ENCODE measurements at regions of chr7 and their contacts with region 1.

Region 1: DNA sequence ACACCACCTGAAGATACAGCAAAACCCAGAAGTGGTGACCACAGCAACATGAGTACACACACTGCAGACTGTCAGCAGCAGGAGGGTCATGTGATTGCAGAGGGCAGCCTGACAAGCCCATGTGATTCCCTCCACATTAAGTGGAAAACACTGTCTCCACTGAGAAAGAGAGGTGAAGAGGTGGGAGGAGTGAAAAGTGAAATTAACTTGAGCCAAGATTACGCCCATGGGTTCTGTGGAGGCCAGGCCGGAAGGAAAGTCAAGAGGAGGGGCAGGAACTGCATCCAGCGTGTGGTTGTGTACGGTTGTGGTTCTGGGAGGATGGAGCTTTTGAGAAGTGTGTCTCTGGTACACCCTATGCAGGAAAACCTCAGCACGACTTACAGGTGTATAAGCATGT is 138.5 kb downstream of the PLXNA4 start:
- DNase-seq: peak in 4 of 10 donors; percentile 32 to 62 (median 46)
- ATAC-seq: peak; percentile 61 to 79
- H3K4me3 Mint-ChIP-seq: peak overlapping the region; percentile 34 to 80 (median 70)
- H3K27ac Mint-ChIP-seq: peak overlapping the region in 9 of 10 donors; percentile 14 to 93 (median 83)
- H3K4me1 Mint-ChIP-seq: peaks cover 46 to 89% (median 83%) of the 10 kb centered on the region in 4 donors
- H3K27me3 Mint-ChIP-seq: no peaks in the 10 kb centered on the region

Region 2: DNA sequence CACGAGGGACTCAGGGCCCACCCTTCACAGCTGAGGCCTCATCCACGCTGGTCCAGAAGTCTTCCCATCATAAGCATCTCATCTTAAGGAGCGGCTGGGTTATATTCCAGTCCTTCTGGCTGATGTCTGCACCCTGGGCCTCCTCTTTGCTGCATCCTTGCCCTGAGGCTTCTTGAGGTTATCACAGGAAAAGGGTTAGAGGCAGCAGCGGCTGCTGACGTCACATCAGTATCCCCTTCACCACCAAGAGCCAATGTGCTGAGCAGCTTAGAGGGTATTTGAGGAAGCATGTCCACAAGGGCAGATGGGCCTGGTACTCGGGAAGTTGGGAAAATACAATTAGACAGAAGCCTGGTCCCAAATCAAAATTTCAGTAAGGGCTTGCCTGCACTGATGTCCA is 13.4 kb after region 1 on chr7:
- POLR2A ChIA-PET with region 1: interaction called, 15 read pairs
- DNase-seq: peak in 5 of 10 donors; percentile 46 to 62 (median 54)
- ATAC-seq: peak; percentile 59 to 84
- H3K4me3 Mint-ChIP-seq: peak overlapping the region in 8 of 10 donors; percentile 7 to 67 (median 26)
- H3K27ac Mint-ChIP-seq: peak overlapping the region; percentile 63 to 91 (median 78)
- H3K4me1 Mint-ChIP-seq: peaks cover 53 to 79% (median 74%) of the 10 kb centered on the region in 4 donors
- H3K27me3 Mint-ChIP-seq: no peaks in the 10 kb centered on the region